ENCODE measurements at regions of chr4 and their contacts with region 1.

Region 1: DNA sequence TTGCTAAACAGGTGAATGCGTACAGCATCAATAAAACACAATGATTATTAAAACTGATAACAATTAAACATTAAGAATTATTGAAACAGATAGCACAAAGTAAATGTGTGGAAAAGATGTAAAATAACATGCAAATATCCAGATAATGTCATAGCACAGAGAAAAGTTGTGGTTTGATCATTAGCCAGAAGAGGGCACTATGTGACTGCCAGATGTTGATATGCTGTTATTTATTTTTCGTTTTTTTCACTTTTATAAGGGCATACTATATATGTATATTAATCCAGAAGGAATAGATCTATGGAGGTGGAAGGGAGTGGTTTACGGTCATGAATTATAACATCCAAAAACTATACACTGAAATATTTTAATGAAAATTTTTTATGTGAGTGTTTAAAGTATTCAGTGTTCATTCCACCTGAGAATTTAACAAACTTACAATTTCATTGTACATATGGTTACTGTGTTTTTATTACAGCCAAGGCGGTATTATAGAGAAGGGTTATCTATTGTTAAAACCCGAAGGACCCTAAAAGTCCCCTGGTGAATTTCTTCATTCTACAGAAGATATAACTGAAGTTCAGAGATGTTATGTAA is 211.9 kb upstream of the UGT8 start:
- DNase-seq: peak; percentile 59
- ATAC-seq: no peak
- H3K4me3 ChIP-seq: no peak overlapping the region
- H3K4me3 Mint-ChIP-seq: no peak overlapping the region
- H3K27ac ChIP-seq: no peak overlapping the region
- H3K27ac Mint-ChIP-seq: no peak overlapping the region
- H3K4me1 ChIP-seq: no peaks in the 10 kb centered on the region
- H3K4me1 Mint-ChIP-seq: no peaks in the 10 kb centered on the region
- H3K27me3 ChIP-seq: peaks cover 0 to 3% (median 0%) of the 10 kb centered on the region in 4 experiments
- H3K27me3 Mint-ChIP-seq: peaks cover 20% of the 10 kb centered on the region
- CTCF ChIP-seq: peak; percentile 96

Region 2: GRCh38 chr4:114603497-114603896 is 216.8 kb after region 1 on chr4:
- CTCF ChIA-PET with region 1: no interaction called
- POLR2A ChIA-PET with region 1: no interaction called
- intact Hi-C with region 1: loop called (anchors 5 kb)
- DNase-seq: peak; percentile 86
- ATAC-seq: peak; percentile 71
- H3K4me3 ChIP-seq: peak overlapping the region in 2 of 5 experiments; percentile 20 to 43
- H3K4me3 Mint-ChIP-seq: no peak overlapping the region
- H3K27ac ChIP-seq: peak overlapping the region; percentile 67 to 93
- H3K27ac Mint-ChIP-seq: no peak overlapping the region
- H3K4me1 ChIP-seq: peaks cover 47 to 65% of the 10 kb centered on the region in 2 donors
- H3K4me1 Mint-ChIP-seq: peaks cover 23% of the 10 kb centered on the region
- H3K27me3 ChIP-seq: no peaks in the 10 kb centered on the region
- H3K27me3 Mint-ChIP-seq: no peaks in the 10 kb centered on the region
- CTCF ChIP-seq: no peak

Region 3: GRCh38 chr4:114694770-114695169 is 308.0 kb after region 1 on chr4:
- CTCF ChIA-PET with region 1: interaction called, 34 read pairs
- POLR2A ChIA-PET with region 1: no interaction called
- intact Hi-C with region 1: loop called (anchors 1 kb)
- DNase-seq: peak; percentile 54
- ATAC-seq: no peak
- H3K4me3 ChIP-seq: no peak overlapping the region
- H3K4me3 Mint-ChIP-seq: no peak overlapping the region
- H3K27ac ChIP-seq: no peak overlapping the region
- H3K27ac Mint-ChIP-seq: no peak overlapping the region
- H3K4me1 ChIP-seq: peaks cover 0 to 6% of the 10 kb centered on the region in 2 donors
- H3K4me1 Mint-ChIP-seq: peaks cover 15% of the 10 kb centered on the region
- H3K27me3 ChIP-seq: no peaks in the 10 kb centered on the region
- H3K27me3 Mint-ChIP-seq: no peaks in the 10 kb centered on the region
- CTCF ChIP-seq: peak; percentile 86

Region 4: GRCh38 chr4:114807759-114808404 is 421.1 kb after region 1 on chr4:
- CTCF ChIA-PET with region 1: interaction called, 12 read pairs
- POLR2A ChIA-PET with region 1: no interaction called
- intact Hi-C with region 1: loop called (anchors 1 kb)
- DNase-seq: peak; percentile 58
- ATAC-seq: peak; percentile 89
- H3K4me3 ChIP-seq: no peak overlapping the region
- H3K4me3 Mint-ChIP-seq: no peak overlapping the region
- H3K27ac ChIP-seq: no peak overlapping the region
- H3K27ac Mint-ChIP-seq: no peak overlapping the region
- H3K4me1 ChIP-seq: no peaks in the 10 kb centered on the region
- H3K4me1 Mint-ChIP-seq: no peaks in the 10 kb centered on the region
- H3K27me3 ChIP-seq: no peaks in the 10 kb centered on the region
- H3K27me3 Mint-ChIP-seq: peaks cover 7% of the 10 kb centered on the region
- CTCF ChIP-seq: peak; percentile 93